Colonic mucosa (tissue), 4 donors: ENCODE measurements at regions of chr1 and their contacts with region 1.

Region 1: DNA sequence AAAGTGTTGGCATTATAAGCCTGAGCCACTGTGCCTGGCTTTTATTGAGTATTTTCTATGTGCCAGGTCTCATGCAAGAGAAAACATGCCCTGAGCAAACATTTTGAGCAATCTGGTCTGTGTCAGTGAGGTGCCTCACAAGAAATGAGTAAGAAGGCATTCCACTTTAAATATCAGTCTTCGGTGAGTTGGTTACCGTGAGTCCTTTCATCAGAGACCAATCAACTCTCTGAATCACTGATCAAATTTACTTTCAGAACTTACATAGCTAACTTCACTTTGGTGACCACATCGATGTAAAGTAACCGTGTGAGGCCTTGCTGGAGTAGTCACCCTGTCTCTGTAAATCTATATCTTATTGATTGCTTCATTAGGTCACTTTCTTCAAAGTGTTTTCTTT is 14.3 kb upstream of the DDX59 start:
- DNase-seq: no peak
- H3K4me3 ChIP-seq: no peak overlapping the region
- H3K27ac ChIP-seq: no peak overlapping the region
- H3K4me1 ChIP-seq: no peaks in the 10 kb centered on the region
- H3K27me3 ChIP-seq: no peaks in the 10 kb centered on the region
- CTCF ChIP-seq: no peak

Region 2: GRCh38 chr1:200751717-200752116 is 67.7 kb after region 1 on chr1:
- intact Hi-C with region 1: no loop called
- DNase-seq: no peak
- H3K4me3 ChIP-seq: no peak overlapping the region
- H3K27ac ChIP-seq: no peak overlapping the region
- H3K4me1 ChIP-seq: no peaks in the 10 kb centered on the region
- H3K27me3 ChIP-seq: no peaks in the 10 kb centered on the region
- CTCF ChIP-seq: no peak

Region 3: DNA sequence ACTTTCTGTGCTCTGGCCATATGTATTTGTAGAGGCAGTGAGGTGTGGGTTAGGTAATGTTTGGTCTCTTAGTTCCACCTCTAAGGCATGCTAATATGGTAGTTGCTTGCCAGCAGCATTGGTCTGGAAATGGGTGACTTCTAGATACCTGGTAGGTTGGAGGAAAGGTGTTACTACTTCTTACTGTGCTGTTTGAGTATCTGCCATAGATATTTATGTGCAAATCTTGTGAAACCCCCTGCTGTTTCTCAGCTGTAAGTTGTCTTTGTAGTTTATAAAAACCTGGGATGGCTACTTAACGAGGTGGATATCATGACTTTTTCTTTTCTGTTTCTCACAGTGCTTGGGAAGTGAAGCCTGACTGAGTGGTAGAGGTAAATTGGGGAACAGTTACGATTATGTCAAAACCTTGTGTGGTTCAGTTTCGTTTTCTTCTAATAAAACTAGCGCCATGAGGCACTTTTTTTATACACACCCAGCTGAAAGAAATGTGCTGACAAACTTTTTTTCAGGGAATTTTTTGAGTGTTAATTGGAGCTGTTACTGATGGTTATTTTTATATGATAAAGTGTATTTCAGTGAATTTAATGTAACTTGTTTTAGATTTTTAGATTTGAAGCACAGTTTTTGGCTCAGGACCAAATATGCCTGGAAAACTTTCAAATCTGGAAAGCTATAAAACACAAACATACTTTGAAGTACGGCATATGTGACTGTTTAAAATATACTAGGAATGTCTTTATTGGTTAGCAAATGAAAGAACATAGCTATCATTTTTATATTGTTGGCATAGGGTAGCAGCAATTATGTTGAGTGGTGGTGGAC is 96.7 kb after region 1 on chr1:
- intact Hi-C with region 1: loop called (anchors 10 kb)
- DNase-seq: no peak
- H3K4me3 ChIP-seq: no peak overlapping the region
- H3K27ac ChIP-seq: no peak overlapping the region
- H3K4me1 ChIP-seq: no peaks in the 10 kb centered on the region
- H3K27me3 ChIP-seq: no peaks in the 10 kb centered on the region
- CTCF ChIP-seq: no peak

Region 4: DNA sequence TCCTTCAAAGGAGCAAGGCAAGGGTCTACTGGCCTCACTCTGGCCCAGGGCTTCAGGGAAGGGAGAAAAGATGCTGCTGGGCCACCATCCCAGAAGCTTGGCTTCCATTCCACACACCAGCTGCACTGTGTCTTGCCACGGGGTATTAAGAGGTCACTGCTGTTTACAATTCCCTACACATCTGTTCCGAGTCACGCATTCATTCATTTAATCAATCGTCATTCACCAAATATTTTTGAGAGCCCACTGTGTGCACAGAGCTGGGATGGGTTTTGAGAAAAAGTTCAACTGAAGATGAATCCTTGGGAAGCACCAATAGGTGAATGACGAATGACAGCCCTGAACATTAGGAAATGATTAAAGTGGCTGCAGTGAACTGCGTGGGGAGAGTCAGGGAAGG is 956.6 kb after region 1 on chr1:
- intact Hi-C with region 1: no loop called
- DNase-seq: peak; percentile 47
- H3K4me3 ChIP-seq: no peak overlapping the region
- H3K27ac ChIP-seq: no peak overlapping the region
- H3K4me1 ChIP-seq: no peaks in the 10 kb centered on the region
- H3K27me3 ChIP-seq: no peaks in the 10 kb centered on the region
- CTCF ChIP-seq: no peak